Right ventricle myocardium superior (tissue), 1 donor: ENCODE measurements at regions of chr14 and their contacts with region 1.

Region 1: GRCh38 chr14:102154821-102155549 is 15.3 kb downstream of the WDR20 start:
- DNase-seq: no peak
- ATAC-seq: no peak

Region 2: DNA sequence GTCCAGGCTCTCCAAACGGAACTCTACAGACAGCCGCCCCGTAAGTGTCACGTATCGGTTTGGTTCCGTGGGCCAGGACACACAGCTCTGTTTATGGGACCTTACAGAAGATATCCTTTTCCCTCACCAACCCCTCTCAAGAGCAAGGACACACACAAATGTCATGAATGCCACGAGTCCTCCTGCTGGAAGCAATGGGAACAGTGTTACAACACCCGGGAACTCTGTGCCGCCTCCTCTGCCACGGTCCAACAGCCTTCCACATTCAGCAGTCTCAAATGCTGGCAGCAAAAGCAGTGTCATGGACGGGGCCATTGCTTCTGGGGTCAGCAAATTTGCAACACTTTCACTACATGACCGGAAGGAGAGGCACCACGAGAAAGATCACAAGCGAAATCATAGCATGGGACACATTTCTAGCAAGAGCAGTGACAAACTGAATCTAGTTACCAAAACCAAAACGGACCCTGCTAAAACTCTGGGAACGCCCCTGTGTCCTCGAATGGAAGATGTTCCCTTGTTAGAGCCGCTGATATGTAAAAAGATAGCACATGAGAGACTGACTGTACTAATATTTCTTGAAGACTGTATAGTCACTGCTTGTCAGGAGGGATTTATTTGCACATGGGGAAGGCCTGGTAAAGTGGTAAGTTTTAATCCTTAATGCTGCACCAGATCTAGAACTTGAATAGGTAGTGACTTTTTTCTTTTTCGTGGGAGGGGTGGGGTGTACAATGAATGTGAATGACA is 54.4 kb after region 1 on chr14:
- intact Hi-C with region 1: loop called (anchors 10 kb)
- DNase-seq: no peak
- ATAC-seq: peak; percentile 84